ENCODE measurements at regions of chr9 and their contacts with region 1.

Region 1: GRCh38 chr9:128504485-128505413 is at the start of gene GLE1:
- DNase-seq: peak; percentile 95
- H3K4me3 ChIP-seq: peak within 1 kb of the TSS; percentile 82
- H3K27ac ChIP-seq: peak within 1 kb of the TSS; percentile 38
- H3K4me1 ChIP-seq: peaks cover 13% of the 10 kb centered on the region
- CTCF ChIP-seq: 0 out of 2 replicates have a peak, but pooled peaks have one; percentile 26
- total RNA-seq, gene GLE1: 30.8 and 34.8 TPM in 2 replicates

Region 2: DNA sequence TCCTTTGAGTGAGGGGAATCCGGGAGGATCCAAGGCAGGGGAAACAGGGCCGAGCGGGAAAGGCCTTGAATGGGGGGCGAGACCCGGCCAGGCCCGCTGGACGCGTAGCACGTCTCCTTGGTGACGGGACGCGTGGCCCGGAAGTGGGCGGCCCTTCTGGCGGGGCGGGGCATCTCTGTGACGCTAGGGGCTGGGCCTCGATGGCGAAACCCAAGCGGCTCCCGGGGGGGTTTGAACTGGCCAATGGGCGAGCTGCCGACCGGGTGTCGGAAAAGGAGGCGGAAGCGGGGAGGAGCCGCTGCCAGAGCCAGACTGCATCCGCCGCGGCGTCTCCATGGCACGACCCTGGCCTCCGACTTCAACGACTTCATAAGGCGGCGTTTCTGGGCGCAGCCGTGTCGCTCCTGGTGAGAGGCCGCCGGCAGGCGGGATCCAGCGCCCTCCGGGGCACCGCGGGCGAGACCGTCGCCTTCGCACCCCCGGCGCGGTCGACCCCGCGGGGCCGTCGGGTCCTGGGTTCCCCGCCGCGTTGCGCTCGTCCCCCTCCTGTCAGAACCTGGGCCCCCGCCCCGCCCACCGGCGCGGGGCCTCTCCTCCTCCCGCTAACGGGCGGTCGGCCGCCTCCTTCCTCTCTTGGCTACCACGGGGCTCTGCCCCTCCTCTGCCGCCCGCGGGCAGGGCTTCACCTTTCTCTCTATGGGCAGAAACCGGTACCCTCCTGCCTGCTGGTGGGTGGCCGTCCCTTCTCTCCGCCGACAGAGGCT is 48.7 kb before region 1 on chr9 and contains the start of gene ODF2:
- CTCF ChIA-PET with region 1: no interaction called
- POLR2A ChIA-PET with region 1: no interaction called
- intact Hi-C with region 1: loop called (anchors 2 kb)
- DNase-seq: peak; percentile 98
- H3K4me3 ChIP-seq: peak within 1 kb of the TSS; percentile 76
- H3K27ac ChIP-seq: peak within 1 kb of the TSS; percentile 75
- H3K4me1 ChIP-seq: peaks cover 10% of the 10 kb centered on the region
- CTCF ChIP-seq: no peak
- total RNA-seq, gene ODF2: 84.4 and 94.3 TPM in 2 replicates

Region 3: GRCh38 chr9:128750926-128751595 is 246.3 kb after region 1 on chr9:
- CTCF ChIA-PET with region 1: no interaction called
- POLR2A ChIA-PET with region 1: no interaction called
- intact Hi-C with region 1: no loop called
- DNase-seq: no peak
- H3K4me3 ChIP-seq: no peak overlapping the region
- H3K27ac ChIP-seq: no peak overlapping the region
- H3K4me1 ChIP-seq: no peaks in the 10 kb centered on the region
- CTCF ChIP-seq: no peak

Region 4: DNA sequence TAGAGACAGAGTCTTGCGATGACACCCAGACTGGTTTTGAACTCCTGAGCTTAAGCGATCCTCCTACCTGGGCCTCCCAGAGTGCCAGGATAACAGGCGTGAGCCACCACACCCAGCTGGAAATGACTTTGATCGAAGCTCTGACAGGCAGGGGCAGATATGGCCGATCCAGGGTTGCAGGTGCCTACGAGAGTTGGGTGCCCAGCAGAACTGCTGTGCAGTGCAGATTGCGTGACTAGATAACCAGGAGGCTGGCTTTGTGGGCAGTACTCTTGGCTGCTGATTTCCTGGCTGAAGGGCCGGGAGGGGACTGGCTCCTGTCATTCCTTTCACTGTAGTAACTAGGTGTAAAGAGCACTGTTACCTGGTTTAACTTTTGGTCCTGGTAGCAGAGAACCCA is 294.1 kb after region 1 on chr9:
- CTCF ChIA-PET with region 1: no interaction called
- POLR2A ChIA-PET with region 1: no interaction called
- intact Hi-C with region 1: no loop called
- DNase-seq: no peak
- H3K4me3 ChIP-seq: no peak overlapping the region
- H3K27ac ChIP-seq: no peak overlapping the region
- H3K4me1 ChIP-seq: no peaks in the 10 kb centered on the region
- CTCF ChIP-seq: no peak

Measured in OCI-LY7 (cell line).